PC-3 (cell line): ENCODE measurements at regions of chr4 and their contacts with region 1.

Region 1: GRCh38 chr4:9944431-9945425 is 76.6 kb downstream of the SLC2A9 start:
- DNase-seq: peak; percentile 60
- ATAC-seq: peak; percentile 69
- H3K4me3 ChIP-seq: no peak overlapping the region
- H3K27ac ChIP-seq: peak overlapping the region; percentile 34
- H3K4me1 ChIP-seq: peaks cover 15% of the 10 kb centered on the region
- H3K27me3 ChIP-seq: no peaks in the 10 kb centered on the region
- CTCF ChIP-seq: no peak

Region 2: DNA sequence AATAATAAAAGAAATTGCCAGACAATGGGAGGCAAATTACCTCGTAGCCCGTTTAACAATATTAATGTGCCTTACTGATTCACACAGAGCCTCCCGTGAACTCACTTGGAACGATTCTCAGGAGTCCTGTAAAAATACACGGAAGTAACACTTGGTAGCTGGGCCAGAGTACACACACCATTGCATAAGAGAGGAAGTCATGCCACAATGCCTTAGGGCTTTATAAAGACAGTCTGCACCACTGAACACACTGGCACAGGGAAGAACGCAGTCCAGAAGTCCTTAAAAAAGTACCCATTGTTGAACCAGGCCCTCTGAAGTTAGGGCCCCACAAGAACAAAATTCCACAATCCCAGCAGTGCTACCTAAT is 61.5 kb after region 1 on chr4:
- CTCF ChIA-PET with region 1: interaction called, 3 read pairs
- POLR2A ChIA-PET with region 1: no interaction called
- intact Hi-C with region 1: loop called (anchors 5 kb)
- DNase-seq: peak; percentile 89
- ATAC-seq: peak; percentile 73
- H3K4me3 ChIP-seq: peak overlapping the region; percentile 53
- H3K27ac ChIP-seq: peak overlapping the region; percentile 100
- H3K4me1 ChIP-seq: peaks cover 43% of the 10 kb centered on the region
- H3K27me3 ChIP-seq: no peaks in the 10 kb centered on the region
- CTCF ChIP-seq: no peak

Region 3: GRCh38 chr4:10116580-10117358 is 172.0 kb after region 1 on chr4 and contains the start of gene WDR1:
- CTCF ChIA-PET with region 1: no interaction called
- POLR2A ChIA-PET with region 1: no interaction called
- intact Hi-C with region 1: no loop called
- DNase-seq: peak; percentile 87
- ATAC-seq: peak; percentile 95
- H3K4me3 ChIP-seq: peak within 1 kb of the TSS; percentile 80
- H3K27ac ChIP-seq: peak within 1 kb of the TSS; percentile 37
- H3K4me1 ChIP-seq: peaks cover 20% of the 10 kb centered on the region
- H3K27me3 ChIP-seq: no peaks in the 10 kb centered on the region
- CTCF ChIP-seq: no peak
- total RNA-seq, gene WDR1: 148 and 150 TPM in 2 replicates